ENCODE measurements at regions of chr22 and their contacts with region 1.

Region 1: GRCh38 chr22:46006379-46007002 is 29.5 kb upstream of the WNT7B start:
- DNase-seq: peak; percentile 79 to 94 (median 89)
- ATAC-seq: peak; percentile 94
- H3K4me3 ChIP-seq: no peak overlapping the region
- H3K4me3 Mint-ChIP-seq: no peak overlapping the region
- H3K27ac ChIP-seq: no peak overlapping the region
- H3K27ac Mint-ChIP-seq: no peak overlapping the region
- H3K4me1 ChIP-seq: peaks cover 16% of the 10 kb centered on the region
- H3K4me1 Mint-ChIP-seq: peaks cover 4% of the 10 kb centered on the region
- H3K27me3 ChIP-seq: peaks cover 0 to 4% of the 10 kb centered on the region in 2 experiments
- H3K27me3 Mint-ChIP-seq: peaks cover 4% of the 10 kb centered on the region
- CTCF ChIP-seq: peak; percentile 95

Region 2: DNA sequence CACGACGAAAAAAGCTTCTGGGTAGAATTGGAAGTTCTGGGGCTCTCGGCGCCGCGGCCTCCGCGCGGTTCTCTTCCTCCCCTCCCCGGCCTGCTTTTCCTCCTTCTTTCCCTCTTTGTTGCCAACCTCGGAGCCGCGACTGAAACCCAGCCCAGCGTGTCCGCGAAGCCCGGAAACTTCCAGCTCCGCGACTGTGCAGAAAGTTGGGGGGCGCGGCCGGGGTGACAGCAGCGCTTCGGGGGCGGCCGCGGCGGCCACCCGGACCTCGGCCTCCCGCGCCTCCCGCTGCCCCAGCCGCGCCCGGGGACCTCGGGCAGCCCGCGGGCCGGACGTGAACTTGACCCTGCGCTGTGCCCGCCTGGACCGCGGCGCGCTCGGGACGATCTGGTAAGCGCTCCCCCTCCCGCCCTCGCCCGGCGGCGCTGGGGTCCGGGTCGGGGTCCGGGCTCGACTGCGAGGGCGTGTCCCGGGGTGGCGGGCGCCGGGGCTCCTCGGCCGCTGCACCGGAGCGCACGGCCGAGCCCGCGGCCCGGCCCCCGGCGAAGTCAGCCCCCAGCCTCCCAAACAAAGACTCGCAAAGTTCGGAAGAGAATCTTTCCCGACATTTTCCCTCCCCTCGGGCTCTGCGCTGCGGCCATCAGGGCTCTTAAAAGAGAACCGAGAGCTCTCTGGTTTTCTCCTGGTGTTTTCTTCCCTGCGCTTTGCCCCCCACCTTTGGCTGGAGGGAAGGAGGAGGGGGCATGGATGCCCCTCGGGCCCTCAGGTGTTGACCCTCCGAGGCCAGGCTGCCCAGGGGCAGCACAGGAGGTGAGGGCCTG is 38.3 kb after region 1 on chr22:
- CTCF ChIA-PET with region 1: interaction called, 12 read pairs
- POLR2A ChIA-PET with region 1: interaction called, 10 read pairs
- intact Hi-C with region 1: no loop called
- DNase-seq: peak in 10 of 14 experiments; percentile 21 to 60 (median 42)
- ATAC-seq: peak; percentile 59
- H3K4me3 ChIP-seq: peak overlapping the region; percentile 52
- H3K4me3 Mint-ChIP-seq: peak overlapping the region; percentile 92
- H3K27ac ChIP-seq: peak overlapping the region; percentile 48 to 55
- H3K27ac Mint-ChIP-seq: peak overlapping the region; percentile 90
- H3K4me1 ChIP-seq: peaks cover 41% of the 10 kb centered on the region
- H3K4me1 Mint-ChIP-seq: peaks cover 34% of the 10 kb centered on the region
- H3K27me3 ChIP-seq: no peaks in the 10 kb centered on the region
- H3K27me3 Mint-ChIP-seq: no peaks in the 10 kb centered on the region
- CTCF ChIP-seq: no peak

Region 3: DNA sequence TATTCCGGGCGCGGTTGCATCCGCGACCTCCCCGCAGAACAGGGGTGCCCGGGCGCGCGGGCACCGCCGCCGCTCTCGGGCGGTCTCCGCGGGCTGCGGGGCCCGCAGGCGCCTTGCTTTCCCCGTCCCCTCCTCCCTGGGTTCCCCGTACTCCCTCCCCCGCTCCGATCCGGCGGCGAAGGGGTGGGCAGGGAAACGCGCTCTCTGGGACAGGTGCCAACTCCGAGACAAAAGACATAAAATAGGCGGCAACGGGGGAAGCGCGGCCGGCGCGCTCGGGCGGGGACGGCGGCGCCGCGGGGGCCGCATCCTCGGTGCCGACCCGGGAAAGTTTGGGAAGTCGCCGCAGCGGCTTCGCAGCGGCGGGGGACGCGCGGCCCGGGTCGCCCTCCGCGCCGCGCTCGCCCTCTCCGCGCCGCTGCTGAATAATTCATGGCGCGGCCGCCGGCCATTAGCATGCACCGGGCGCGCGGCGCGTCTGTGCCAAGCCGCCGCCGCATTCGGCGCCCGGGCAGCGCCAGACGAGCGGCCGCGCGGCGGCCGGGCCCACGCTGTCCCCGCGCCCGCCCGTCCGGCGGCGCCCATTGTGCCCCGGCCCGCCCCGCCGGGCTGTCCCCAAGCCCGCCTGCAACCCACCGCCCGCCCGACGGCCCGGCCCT is 65.1 kb after region 1 on chr22:
- CTCF ChIA-PET with region 1: interaction called, 12 read pairs
- POLR2A ChIA-PET with region 1: interaction called, 5 read pairs
- intact Hi-C with region 1: no loop called
- DNase-seq: peak; percentile 45 to 80 (median 60)
- ATAC-seq: peak; percentile 28
- H3K4me3 ChIP-seq: peak overlapping the region; percentile 38
- H3K4me3 Mint-ChIP-seq: peak overlapping the region; percentile 90
- H3K27ac ChIP-seq: peak overlapping the region in 1 of 2 donors; percentile 46
- H3K27ac Mint-ChIP-seq: peak overlapping the region; percentile 78
- H3K4me1 ChIP-seq: peaks cover 56% of the 10 kb centered on the region
- H3K4me1 Mint-ChIP-seq: peaks cover 55% of the 10 kb centered on the region
- H3K27me3 ChIP-seq: peaks cover 0 to 10% of the 10 kb centered on the region in 2 experiments
- H3K27me3 Mint-ChIP-seq: no peaks in the 10 kb centered on the region
- CTCF ChIP-seq: no peak

Region 4: GRCh38 chr22:46122511-46122971 is 116.0 kb after region 1 on chr22:
- CTCF ChIA-PET with region 1: interaction called, 78 read pairs
- POLR2A ChIA-PET with region 1: no interaction called
- intact Hi-C with region 1: no loop called
- DNase-seq: peak; percentile 45 to 83 (median 64)
- ATAC-seq: peak; percentile 78
- H3K4me3 ChIP-seq: no peak overlapping the region
- H3K4me3 Mint-ChIP-seq: no peak overlapping the region
- H3K27ac ChIP-seq: no peak overlapping the region
- H3K27ac Mint-ChIP-seq: no peak overlapping the region
- H3K4me1 ChIP-seq: peaks cover 8% of the 10 kb centered on the region
- H3K4me1 Mint-ChIP-seq: no peaks in the 10 kb centered on the region
- H3K27me3 ChIP-seq: no peaks in the 10 kb centered on the region
- H3K27me3 Mint-ChIP-seq: no peaks in the 10 kb centered on the region
- CTCF ChIP-seq: peak; percentile 92

Region 5: GRCh38 chr22:46309526-46310085 is 303.1 kb after region 1 on chr22:
- CTCF ChIA-PET with region 1: interaction called, 3 read pairs
- POLR2A ChIA-PET with region 1: no interaction called
- intact Hi-C with region 1: loop called in 1 of 2 experiments (anchors 5 kb)
- DNase-seq: no peak
- ATAC-seq: no peak
- H3K4me3 ChIP-seq: no peak overlapping the region
- H3K4me3 Mint-ChIP-seq: no peak overlapping the region
- H3K27ac ChIP-seq: no peak overlapping the region
- H3K27ac Mint-ChIP-seq: no peak overlapping the region
- H3K4me1 ChIP-seq: no peaks in the 10 kb centered on the region
- H3K4me1 Mint-ChIP-seq: no peaks in the 10 kb centered on the region
- H3K27me3 ChIP-seq: no peaks in the 10 kb centered on the region
- H3K27me3 Mint-ChIP-seq: no peaks in the 10 kb centered on the region
- CTCF ChIP-seq: no peak

Measured in CD4-positive, alpha-beta T cell (primary cell).